ENCODE measurements at regions of chr14 and their contacts with region 1.

Region 1: DNA sequence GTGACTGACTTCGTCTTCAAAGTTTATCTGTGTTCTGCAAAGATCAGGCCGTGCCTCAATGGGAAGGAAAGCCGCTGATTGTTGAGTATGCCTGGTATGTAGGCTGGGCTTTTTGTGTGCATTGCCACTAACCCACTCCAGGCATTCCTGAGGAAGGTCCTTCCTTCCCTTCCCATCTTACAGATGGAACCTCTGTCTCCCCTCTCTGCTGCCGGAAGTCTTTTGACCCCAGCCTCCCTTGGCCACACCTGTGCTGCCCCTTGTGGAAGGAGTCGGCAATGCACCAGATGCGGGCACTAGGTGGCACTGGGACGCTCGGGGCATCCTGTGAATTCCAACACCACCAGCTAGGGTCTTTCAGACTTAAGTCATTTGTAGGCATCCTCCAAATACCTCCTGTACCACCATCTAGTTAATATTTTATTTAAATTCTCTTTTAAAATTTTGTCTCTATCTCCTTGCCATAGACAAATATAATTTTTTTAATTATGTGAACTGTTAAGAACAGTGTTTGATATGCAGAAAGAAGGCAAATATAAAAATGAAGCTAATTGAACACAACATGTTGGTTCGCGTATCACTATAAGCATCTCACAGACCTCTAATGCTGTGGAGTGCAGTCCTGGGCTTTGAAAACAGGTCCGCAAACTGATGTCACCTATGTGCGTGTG is 99.5 kb downstream of the RIN3 start:
- DNase-seq: peak; percentile 83
- H3K4me3 Mint-ChIP-seq: no peak overlapping the region
- H3K27ac Mint-ChIP-seq: no peak overlapping the region
- H3K4me1 Mint-ChIP-seq: peaks cover 42% of the 10 kb centered on the region
- H3K27me3 Mint-ChIP-seq: no peaks in the 10 kb centered on the region

Region 2: DNA sequence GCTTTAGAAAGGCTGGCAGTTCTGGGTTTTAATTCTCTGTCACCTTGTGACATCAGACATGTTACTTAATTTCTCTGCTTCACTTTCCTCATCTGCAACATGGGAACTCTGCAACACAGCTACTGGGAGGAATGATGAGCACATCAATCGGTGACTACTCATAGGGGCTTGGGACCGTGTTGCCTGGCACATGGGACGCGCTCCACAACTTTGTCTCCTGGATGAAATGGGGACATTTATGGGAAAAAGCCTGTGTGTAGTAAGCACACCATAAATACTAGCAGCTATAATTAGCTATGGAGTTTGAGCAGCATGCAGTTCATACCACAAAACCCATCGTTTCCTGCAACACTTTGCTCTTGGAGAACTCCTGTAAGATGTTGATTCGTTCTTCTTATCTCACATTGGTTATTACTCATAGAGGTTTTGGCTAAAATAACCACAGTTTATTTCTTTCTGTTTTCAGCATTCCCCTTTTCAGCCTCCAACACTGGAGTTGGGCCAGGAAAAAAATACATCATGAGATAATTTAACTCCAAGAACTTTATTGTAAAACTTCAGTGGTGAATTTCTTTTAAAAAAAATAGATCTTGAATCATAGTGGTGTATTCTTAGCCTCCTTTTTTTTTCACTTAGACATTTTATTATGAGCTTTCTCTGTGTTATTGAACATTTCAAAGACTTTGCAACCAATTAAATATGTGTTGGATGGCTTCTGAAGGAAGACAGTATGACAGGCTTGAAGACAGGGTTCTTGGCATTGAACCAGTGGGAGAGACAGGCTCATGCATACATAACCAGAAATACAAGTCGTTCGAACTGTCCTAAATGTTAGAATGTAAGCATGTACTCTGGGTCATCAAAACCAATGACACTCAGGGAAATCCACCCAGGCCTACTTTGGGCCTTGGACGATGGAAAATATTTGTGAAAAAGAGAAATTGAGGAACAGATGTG is 26.9 kb before region 1 on chr14:
- CTCF ChIA-PET with region 1: interaction called, 11 read pairs
- POLR2A ChIA-PET with region 1: no interaction called
- intact Hi-C with region 1: no loop called
- DNase-seq: peak; percentile 34
- H3K4me3 Mint-ChIP-seq: peak overlapping the region; percentile 25
- H3K27ac Mint-ChIP-seq: peak overlapping the region; percentile 66
- H3K4me1 Mint-ChIP-seq: peaks cover 69% of the 10 kb centered on the region
- H3K27me3 Mint-ChIP-seq: no peaks in the 10 kb centered on the region

Region 3: DNA sequence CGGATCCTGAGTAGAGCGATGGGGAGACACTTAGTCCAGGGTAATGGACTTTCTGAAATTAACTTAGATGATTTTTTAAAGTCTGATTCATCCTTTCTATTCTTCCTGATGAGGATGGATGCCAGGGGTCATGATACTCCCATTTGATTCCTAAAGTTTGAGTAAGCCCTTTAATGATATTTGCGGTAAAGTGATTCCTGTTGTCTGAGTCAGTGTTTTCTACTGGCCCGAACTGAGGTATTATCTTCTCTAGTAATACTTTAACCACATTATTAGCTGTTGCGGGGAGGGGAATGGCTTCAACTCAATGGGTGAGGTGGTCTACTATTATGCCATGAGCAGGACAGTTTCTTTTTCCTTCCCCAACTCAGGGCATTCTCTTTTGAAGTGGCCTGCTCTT is 12.1 kb after region 1 on chr14:
- CTCF ChIA-PET with region 1: interaction called, 11 read pairs
- POLR2A ChIA-PET with region 1: no interaction called
- intact Hi-C with region 1: no loop called
- DNase-seq: no peak
- H3K4me3 Mint-ChIP-seq: no peak overlapping the region
- H3K27ac Mint-ChIP-seq: no peak overlapping the region
- H3K4me1 Mint-ChIP-seq: no peaks in the 10 kb centered on the region
- H3K27me3 Mint-ChIP-seq: no peaks in the 10 kb centered on the region

Region 4: DNA sequence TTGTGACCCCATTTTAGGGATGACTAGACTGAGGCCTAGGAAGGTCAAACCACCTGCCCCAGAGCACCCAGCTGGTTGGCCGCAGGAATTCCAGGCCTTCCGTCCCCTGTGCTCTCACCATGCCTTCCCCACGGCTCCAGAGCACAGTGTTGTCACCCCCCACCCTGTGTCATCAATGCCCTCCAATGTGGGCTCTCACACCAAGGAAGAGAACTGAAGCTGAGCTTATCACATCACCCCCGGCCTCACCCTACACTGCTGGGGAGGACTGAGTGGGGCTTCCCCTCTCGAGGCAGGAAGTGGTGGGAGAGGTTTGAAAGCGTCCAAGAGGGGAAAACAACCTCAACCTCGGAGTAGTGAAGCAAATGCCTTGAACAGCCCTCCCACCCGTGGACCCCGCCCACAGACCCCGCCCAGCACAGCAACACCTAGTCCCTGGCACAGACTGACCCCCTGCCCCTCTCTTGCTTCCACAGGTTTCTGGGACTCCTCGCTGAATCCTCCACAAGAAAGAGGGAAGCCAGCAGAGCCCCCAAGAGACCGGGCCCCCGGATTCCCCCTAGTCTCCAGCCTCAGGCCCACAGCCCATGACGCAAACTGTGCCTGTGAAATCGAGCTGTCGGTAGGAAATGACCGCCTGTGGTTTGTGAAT is 38.1 kb after region 1 on chr14:
- CTCF ChIA-PET with region 1: interaction called, 22 read pairs
- POLR2A ChIA-PET with region 1: interaction called, 4 read pairs
- intact Hi-C with region 1: loop called (anchors 2 kb)
- DNase-seq: peak; percentile 90
- H3K4me3 Mint-ChIP-seq: peak overlapping the region; percentile 93
- H3K27ac Mint-ChIP-seq: peak overlapping the region; percentile 97
- H3K4me1 Mint-ChIP-seq: peaks cover 77% of the 10 kb centered on the region
- H3K27me3 Mint-ChIP-seq: no peaks in the 10 kb centered on the region

Region 5: GRCh38 chr14:92675421-92675820 is 62.3 kb after region 1 on chr14:
- CTCF ChIA-PET with region 1: interaction called, 37 read pairs
- POLR2A ChIA-PET with region 1: no interaction called
- intact Hi-C with region 1: no loop called
- DNase-seq: no peak
- H3K4me3 Mint-ChIP-seq: no peak overlapping the region
- H3K27ac Mint-ChIP-seq: no peak overlapping the region
- H3K4me1 Mint-ChIP-seq: peaks cover 62% of the 10 kb centered on the region
- H3K27me3 Mint-ChIP-seq: no peaks in the 10 kb centered on the region

Measured in activated CD4-positive, alpha-beta memory T cell treated with anti-CD3 and anti-CD28 coated beads for 36 hours (primary cell).